ENCODE measurements at regions of chr15 and their contacts with region 1.

Region 1: GRCh38 chr15:67296188-67296587 is 41.6 kb downstream of the IQCH start:
- DNase-seq: no peak
- H3K4me3 ChIP-seq: no peak overlapping the region
- H3K27ac ChIP-seq: no peak overlapping the region
- H3K4me1 ChIP-seq: peaks cover 0 to 10% (median 0%) of the 10 kb centered on the region in 6 donors
- H3K27me3 ChIP-seq: no peaks in the 10 kb centered on the region
- CTCF ChIP-seq: no peak
- POLR2A ChIP-seq: no peak

Region 2: GRCh38 chr15:66951531-66952320 is 344.5 kb before region 1 on chr15:
- intact Hi-C with region 1: loop called (anchors 2 kb)
- DNase-seq: no peak
- H3K4me3 ChIP-seq: no peak overlapping the region
- H3K27ac ChIP-seq: no peak overlapping the region
- H3K4me1 ChIP-seq: peaks cover 0 to 7% (median 2%) of the 10 kb centered on the region in 6 donors
- H3K27me3 ChIP-seq: peaks cover 0 to 6% (median 0%) of the 10 kb centered on the region in 7 donors
- CTCF ChIP-seq: no peak
- POLR2A ChIP-seq: no peak

Region 3: GRCh38 chr15:67501177-67501835 is 205.1 kb after region 1 on chr15:
- intact Hi-C with region 1: no loop called
- DNase-seq: no peak
- H3K4me3 ChIP-seq: no peak overlapping the region
- H3K27ac ChIP-seq: no peak overlapping the region
- H3K4me1 ChIP-seq: peaks cover 0 to 15% (median 8%) of the 10 kb centered on the region in 6 donors
- H3K27me3 ChIP-seq: no peaks in the 10 kb centered on the region
- CTCF ChIP-seq: peak in 3 of 11 experiments; percentile 13 to 29 (median 16)
- POLR2A ChIP-seq: no peak

Measured in spleen (tissue), 13 donors.